Prostate gland (tissue), 2 donors: ENCODE measurements at regions of chr7 and their contacts with region 1.

Region 1: GRCh38 chr7:82234457-82235049 is 209.0 kb downstream of the CACNA2D1 start:
- DNase-seq: peak; percentile 10
- H3K4me3 ChIP-seq: no peak overlapping the region
- H3K27ac ChIP-seq: no peak overlapping the region
- H3K4me1 ChIP-seq: no peaks in the 10 kb centered on the region
- H3K27me3 ChIP-seq: no peaks in the 10 kb centered on the region
- CTCF ChIP-seq: peak; percentile 39 to 70 (median 64)
- POLR2A ChIP-seq: no peak

Region 2: DNA sequence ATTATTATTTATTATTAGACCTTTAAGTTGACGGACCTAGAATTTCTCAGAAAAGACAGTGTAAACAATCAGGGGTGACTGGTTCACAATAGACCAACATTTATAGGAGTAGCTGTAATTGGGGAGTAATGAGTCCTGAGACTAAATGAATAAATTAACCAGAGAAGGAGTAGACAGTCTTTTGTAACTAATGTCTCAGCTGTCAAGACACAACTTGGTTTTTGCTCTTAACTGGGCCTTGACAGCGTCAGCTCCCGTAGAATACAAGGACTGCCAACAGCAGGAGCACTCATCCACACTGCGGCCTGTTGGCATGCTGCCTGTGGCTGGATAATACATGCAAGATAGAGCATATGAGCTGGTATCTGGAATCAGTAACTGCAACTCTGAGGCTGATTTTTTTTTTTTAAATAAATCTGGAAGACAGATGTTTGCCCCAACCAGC is 85.1 kb after region 1 on chr7:
- intact Hi-C with region 1: no loop called
- DNase-seq: peak; percentile 71
- H3K4me3 ChIP-seq: no peak overlapping the region
- H3K27ac ChIP-seq: peak overlapping the region in 1 of 2 donors; percentile 7
- H3K4me1 ChIP-seq: peaks cover 6% of the 10 kb centered on the region
- H3K27me3 ChIP-seq: no peaks in the 10 kb centered on the region
- CTCF ChIP-seq: no peak
- POLR2A ChIP-seq: no peak

Region 3: GRCh38 chr7:82443547-82444219 is 209.1 kb after region 1 on chr7 and contains the start of gene CACNA2D1:
- intact Hi-C with region 1: loop called (anchors 5 kb)
- DNase-seq: peak; percentile 83
- H3K4me3 ChIP-seq: peak within 1 kb of the TSS; percentile 78 to 88
- H3K27ac ChIP-seq: peak within 1 kb of the TSS; percentile 92 to 94
- H3K4me1 ChIP-seq: no peaks in the 10 kb centered on the region
- H3K27me3 ChIP-seq: no peaks in the 10 kb centered on the region
- CTCF ChIP-seq: peak in 2 of 4 experiments; percentile 14 to 37
- POLR2A ChIP-seq: no peak
- total RNA-seq, gene CACNA2D1: 16.9 to 24.4 TPM

Region 4: DNA sequence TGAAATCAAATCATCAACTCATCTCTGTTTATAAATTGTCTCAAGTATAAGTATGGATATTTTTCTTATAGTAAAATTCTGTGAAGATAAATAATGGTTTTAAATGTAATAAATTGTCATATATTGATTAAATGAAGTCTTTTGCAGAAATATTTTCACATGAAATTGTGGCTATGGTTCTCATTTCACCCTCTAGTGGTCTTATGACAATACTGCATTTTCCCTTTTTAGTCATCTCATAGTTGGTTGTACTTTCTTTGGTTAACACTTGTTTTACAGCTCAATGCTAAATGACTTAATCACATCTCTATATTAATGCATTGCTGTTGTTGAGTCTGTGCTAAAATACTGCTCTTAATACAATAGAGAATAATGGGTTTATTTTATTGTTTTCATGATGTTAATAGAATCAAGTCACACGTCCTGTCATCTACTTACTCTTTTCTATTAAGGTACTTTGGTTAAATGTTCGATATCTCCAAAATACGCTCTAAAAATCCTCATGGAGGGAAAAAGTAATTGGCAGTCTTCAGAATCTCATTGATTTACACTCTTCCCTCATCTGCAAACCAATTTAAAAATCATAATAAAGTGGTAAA is 247.0 kb after region 1 on chr7:
- intact Hi-C with region 1: loop called (anchors 10 kb)
- DNase-seq: no peak
- H3K4me3 ChIP-seq: no peak overlapping the region
- H3K27ac ChIP-seq: no peak overlapping the region
- H3K4me1 ChIP-seq: no peaks in the 10 kb centered on the region
- H3K27me3 ChIP-seq: no peaks in the 10 kb centered on the region
- CTCF ChIP-seq: peak; percentile 14 to 68 (median 60)
- POLR2A ChIP-seq: no peak

Region 5: GRCh38 chr7:82572195-82572880 is 337.8 kb after region 1 on chr7:
- intact Hi-C with region 1: loop called (anchors 5 kb)
- DNase-seq: peak; percentile 86
- H3K4me3 ChIP-seq: no peak overlapping the region
- H3K27ac ChIP-seq: no peak overlapping the region
- H3K4me1 ChIP-seq: no peaks in the 10 kb centered on the region
- H3K27me3 ChIP-seq: no peaks in the 10 kb centered on the region
- CTCF ChIP-seq: peak; percentile 63 to 95 (median 82)
- POLR2A ChIP-seq: no peak